Naive thymus-derived CD4-positive, alpha-beta T cell (primary cell): ENCODE measurements at regions of chr12 and their contacts with region 1.

Region 1: GRCh38 chr12:6533923-6534694 is at the start of gene GAPDH:
- DNase-seq: peak; percentile 66 to 94 (median 83)
- ATAC-seq: peak; percentile 66
- H3K4me3 ChIP-seq: peak within 1 kb of the TSS; percentile 97
- H3K4me3 Mint-ChIP-seq: peak within 1 kb of the TSS; percentile 90 to 99 (median 94)
- H3K27ac ChIP-seq: peak within 1 kb of the TSS; percentile 81
- H3K27ac Mint-ChIP-seq: peak within 1 kb of the TSS; percentile 92 to 100 (median 94)
- H3K4me1 ChIP-seq: peaks cover 31 to 43% of the 10 kb centered on the region in 2 donors
- H3K4me1 Mint-ChIP-seq: peaks cover 28 to 59% (median 42%) of the 10 kb centered on the region in 7 donors
- H3K27me3 ChIP-seq: no peaks in the 10 kb centered on the region
- H3K27me3 Mint-ChIP-seq: peaks cover 0 to 2% (median 0%) of the 10 kb centered on the region in 5 donors
- total RNA-seq, gene GAPDH: 330 to 4,503 (median 379) TPM

Region 2: GRCh38 chr12:6323340-6323994 is 210.6 kb before region 1 on chr12:
- CTCF ChIA-PET with region 1: interaction called, 7 read pairs
- POLR2A ChIA-PET with region 1: interaction called, 6 read pairs
- intact Hi-C with region 1: loop called in 1 of 2 experiments (anchors 1 kb)
- DNase-seq: peak in 5 of 9 donors; percentile 49 to 59 (median 52)
- ATAC-seq: peak; percentile 90
- H3K4me3 ChIP-seq: peak overlapping the region; percentile 45
- H3K4me3 Mint-ChIP-seq: peak overlapping the region; percentile 63 to 90 (median 82)
- H3K27ac ChIP-seq: peak overlapping the region; percentile 35
- H3K27ac Mint-ChIP-seq: peak overlapping the region; percentile 68 to 95 (median 89)
- H3K4me1 ChIP-seq: peaks cover 27 to 38% of the 10 kb centered on the region in 2 donors
- H3K4me1 Mint-ChIP-seq: peaks cover 37 to 74% (median 53%) of the 10 kb centered on the region in 7 donors
- H3K27me3 ChIP-seq: no peaks in the 10 kb centered on the region
- H3K27me3 Mint-ChIP-seq: peaks cover 0 to 6% (median 0%) of the 10 kb centered on the region in 5 donors

Region 3: DNA sequence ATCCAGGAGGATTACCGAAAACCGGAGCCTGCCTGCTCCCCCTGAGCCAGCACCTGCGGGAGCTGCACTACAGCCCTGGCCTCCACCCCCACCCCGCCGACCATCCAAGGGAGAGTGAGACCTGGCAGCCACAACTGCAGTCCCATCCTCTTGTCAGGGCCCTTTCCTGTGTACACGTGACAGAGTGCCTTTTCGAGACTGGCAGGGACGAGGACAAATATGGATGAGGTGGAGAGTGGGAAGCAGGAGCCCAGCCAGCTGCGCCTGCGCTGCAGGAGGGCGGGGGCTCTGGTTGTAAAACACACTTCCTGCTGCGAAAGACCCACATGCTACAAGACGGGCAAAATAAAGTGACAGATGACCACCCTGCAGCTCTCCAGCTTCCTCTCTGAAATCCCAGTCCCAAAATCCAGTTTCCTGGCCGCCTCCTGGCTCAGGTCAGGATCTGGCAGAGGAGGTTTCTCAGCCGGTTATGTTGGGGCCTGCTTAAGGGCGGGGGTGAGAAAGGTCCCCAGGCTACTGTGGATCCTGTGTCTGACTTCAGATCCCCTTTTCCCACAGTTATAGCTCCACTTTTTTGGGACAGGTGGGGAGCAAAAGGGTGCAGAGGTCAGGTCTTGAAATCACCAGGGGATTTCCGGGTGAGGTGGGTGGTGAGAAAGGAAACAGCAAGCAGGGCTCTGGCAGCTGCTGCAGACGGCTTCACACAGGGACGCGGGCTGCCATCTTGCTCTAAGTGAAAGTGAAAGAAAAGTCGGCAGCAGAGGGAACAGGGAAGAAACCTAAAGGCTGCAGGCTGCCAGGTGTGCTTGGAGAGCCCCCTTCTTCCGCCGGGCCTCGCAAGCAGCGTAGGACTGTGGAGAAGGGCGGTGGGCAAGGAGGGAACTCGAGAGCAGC is 82.5 kb before region 1 on chr12 and contains the start of gene TAPBPL:
- CTCF ChIA-PET with region 1: interaction called, 7 read pairs
- POLR2A ChIA-PET with region 1: interaction called, 22 read pairs
- intact Hi-C with region 1: no loop called
- DNase-seq: peak; percentile 49 to 93 (median 87)
- ATAC-seq: peak; percentile 94
- H3K4me3 ChIP-seq: peak within 1 kb of the TSS; percentile 83
- H3K4me3 Mint-ChIP-seq: peak within 1 kb of the TSS; percentile 96 to 100 (median 98)
- H3K27ac ChIP-seq: peak within 1 kb of the TSS; percentile 96
- H3K27ac Mint-ChIP-seq: peak within 1 kb of the TSS; percentile 96 to 100 (median 99)
- H3K4me1 ChIP-seq: peaks cover 50% of the 10 kb centered on the region in 2 donors
- H3K4me1 Mint-ChIP-seq: peaks cover 50 to 84% (median 73%) of the 10 kb centered on the region in 7 donors
- H3K27me3 ChIP-seq: no peaks in the 10 kb centered on the region
- H3K27me3 Mint-ChIP-seq: no peaks in the 10 kb centered on the region
- total RNA-seq, gene TAPBPL: 23.0 to 65.4 (median 52.9) TPM

Region 4: DNA sequence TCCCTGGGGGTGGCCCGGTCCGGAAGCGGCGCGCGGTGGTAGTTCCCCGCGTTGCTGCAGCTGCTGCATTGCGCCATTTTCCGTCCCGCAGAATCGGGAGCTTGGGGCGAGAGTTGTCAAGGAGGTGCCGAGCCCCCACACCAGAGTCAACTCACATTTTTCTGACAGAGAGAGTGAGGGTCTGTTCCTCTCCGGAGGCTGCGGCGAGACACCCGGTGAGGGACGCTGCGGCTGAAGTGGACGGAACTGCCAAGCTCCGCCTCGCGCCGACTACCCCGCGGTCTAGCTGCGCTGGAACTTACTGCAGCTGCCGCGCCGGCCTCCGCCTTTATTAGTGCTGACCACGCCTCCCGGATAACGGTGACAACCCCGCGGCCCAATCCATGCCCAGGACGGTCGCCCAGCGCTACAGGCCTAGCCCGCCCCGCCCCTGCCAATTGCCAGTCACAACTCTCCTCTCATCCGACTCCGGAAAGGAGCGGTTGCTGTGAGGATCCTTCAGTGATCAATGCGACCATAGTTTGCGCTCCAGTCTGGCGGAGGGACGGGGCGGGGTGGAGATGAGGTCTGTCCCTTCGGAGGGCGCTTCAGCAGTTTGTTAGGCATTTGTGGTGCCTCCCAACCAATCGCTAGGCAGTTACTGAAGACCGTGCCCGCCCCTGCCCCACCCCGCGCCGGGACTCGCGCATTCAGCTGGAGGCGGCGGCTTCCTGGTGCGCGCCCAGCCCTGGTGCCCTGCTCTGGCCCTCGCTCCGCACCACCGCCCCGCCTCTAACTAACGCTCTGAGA is 63.5 kb before region 1 on chr12 and contains the start of gene VAMP1:
- CTCF ChIA-PET with region 1: interaction called, 12 read pairs
- POLR2A ChIA-PET with region 1: interaction called, 87 read pairs
- intact Hi-C with region 1: loop called (anchors 1 kb)
- DNase-seq: peak; percentile 90 to 97 (median 95)
- ATAC-seq: peak; percentile 94
- H3K4me3 ChIP-seq: peak within 1 kb of the TSS; percentile 96
- H3K4me3 Mint-ChIP-seq: peak within 1 kb of the TSS; percentile 85 to 96 (median 92)
- H3K27ac ChIP-seq: peak within 1 kb of the TSS; percentile 75
- H3K27ac Mint-ChIP-seq: peak within 1 kb of the TSS; percentile 79 to 99 (median 95)
- H3K4me1 ChIP-seq: peaks cover 38 to 39% of the 10 kb centered on the region in 2 donors
- H3K4me1 Mint-ChIP-seq: peaks cover 26 to 59% (median 52%) of the 10 kb centered on the region in 7 donors
- H3K27me3 ChIP-seq: no peaks in the 10 kb centered on the region
- H3K27me3 Mint-ChIP-seq: peaks cover 0 to 5% (median 0%) of the 10 kb centered on the region in 5 donors
- total RNA-seq, gene VAMP1: 38.7 to 123 (median 47.9) TPM

Region 5: DNA sequence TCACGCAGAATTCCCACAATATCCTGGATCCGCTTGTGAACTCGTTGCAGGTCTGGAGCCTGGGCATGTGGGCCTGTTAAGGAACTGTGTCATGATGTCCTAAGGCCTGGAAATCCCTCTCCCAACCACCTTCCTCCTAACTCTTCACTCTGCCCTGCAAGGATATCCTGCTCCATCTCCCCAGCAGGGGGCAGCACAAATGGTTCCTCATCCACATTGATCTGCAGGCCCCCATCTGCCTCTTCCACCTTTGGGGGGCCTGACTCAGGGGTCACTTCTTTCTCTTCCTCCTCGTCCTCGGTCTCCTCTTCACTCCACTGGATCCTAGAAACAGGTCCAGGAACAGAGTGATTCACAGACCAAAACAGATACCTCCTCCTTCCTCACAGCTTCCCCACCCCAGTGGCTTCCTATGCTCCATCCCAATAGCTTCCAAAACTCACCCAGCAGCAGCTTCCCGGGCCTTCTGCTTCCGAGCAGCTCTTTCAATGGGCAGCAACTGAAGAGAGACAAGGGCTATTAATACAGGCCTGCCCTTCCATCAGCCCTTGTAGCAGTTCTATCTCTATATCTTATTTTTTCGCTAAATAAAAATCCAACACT is 29.4 kb after region 1 on chr12:
- CTCF ChIA-PET with region 1: interaction called, 4 read pairs
- POLR2A ChIA-PET with region 1: interaction called, 4 read pairs
- intact Hi-C with region 1: loop called (anchors 1 to 2 kb)
- DNase-seq: peak; percentile 36 to 68 (median 52)
- ATAC-seq: peak; percentile 43
- H3K4me3 ChIP-seq: no peak overlapping the region
- H3K4me3 Mint-ChIP-seq: peak overlapping the region in 2 of 10 donors; percentile 6 to 55
- H3K27ac ChIP-seq: no peak overlapping the region
- H3K27ac Mint-ChIP-seq: peak overlapping the region in 7 of 9 donors; percentile 9 to 86 (median 78)
- H3K4me1 ChIP-seq: peaks cover 8 to 14% of the 10 kb centered on the region in 2 donors
- H3K4me1 Mint-ChIP-seq: peaks cover 22 to 54% (median 41%) of the 10 kb centered on the region in 7 donors
- H3K27me3 ChIP-seq: no peaks in the 10 kb centered on the region
- H3K27me3 Mint-ChIP-seq: no peaks in the 10 kb centered on the region

Region 6: DNA sequence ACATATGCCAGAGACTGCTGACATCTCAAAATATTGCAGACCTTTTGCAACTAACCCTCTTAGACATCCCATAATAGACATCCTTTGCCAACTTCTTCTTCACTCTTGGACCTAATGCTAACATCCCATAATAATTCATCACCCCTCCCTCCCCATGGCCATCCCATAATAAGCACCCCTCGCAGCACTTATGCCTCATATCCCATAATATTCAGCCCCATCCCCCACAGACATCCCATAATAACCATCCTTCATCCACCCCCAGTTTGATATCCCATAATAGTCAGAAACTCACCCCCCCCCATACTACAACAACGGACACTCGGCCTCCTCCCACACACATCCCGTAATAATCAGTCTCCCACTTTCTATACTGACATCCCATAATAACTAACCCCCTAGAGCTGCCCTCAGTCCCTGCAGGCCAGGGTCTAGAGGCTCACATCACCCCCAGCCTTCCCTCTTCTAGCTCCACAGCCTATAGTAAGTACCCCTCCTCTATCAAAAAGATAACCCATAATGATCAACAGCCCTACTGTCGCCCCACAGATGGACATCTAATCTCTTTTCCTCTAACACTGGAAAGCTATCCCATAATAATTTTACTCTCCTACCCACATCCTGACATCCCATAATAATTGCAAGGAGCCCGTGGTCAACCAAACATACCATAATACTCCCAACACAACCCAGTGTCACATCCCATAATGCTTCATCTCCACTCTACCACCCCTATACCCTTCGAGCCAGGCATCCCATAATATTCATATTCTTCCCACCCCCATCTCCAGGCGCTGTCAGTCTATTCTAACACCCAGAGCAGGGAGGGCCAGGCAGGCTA is 73.9 kb after region 1 on chr12:
- CTCF ChIA-PET with region 1: no interaction called
- POLR2A ChIA-PET with region 1: interaction called, 10 read pairs
- intact Hi-C with region 1: loop called (anchors 1 to 2 kb)
- DNase-seq: peak in 8 of 9 donors; percentile 56 to 81 (median 71)
- ATAC-seq: peak; percentile 49
- H3K4me3 ChIP-seq: no peak overlapping the region
- H3K4me3 Mint-ChIP-seq: no peak overlapping the region
- H3K27ac ChIP-seq: peak overlapping the region; percentile 96
- H3K27ac Mint-ChIP-seq: no peak overlapping the region
- H3K4me1 ChIP-seq: peaks cover 46 to 47% of the 10 kb centered on the region in 2 donors
- H3K4me1 Mint-ChIP-seq: peaks cover 48 to 55% (median 51%) of the 10 kb centered on the region in 7 donors
- H3K27me3 ChIP-seq: no peaks in the 10 kb centered on the region
- H3K27me3 Mint-ChIP-seq: no peaks in the 10 kb centered on the region

Region 7: GRCh38 chr12:6708960-6709394 is 174.9 kb after region 1 on chr12:
- CTCF ChIA-PET with region 1: no interaction called
- POLR2A ChIA-PET with region 1: no interaction called
- intact Hi-C with region 1: no loop called
- DNase-seq: peak in 5 of 9 donors; percentile 25 to 75 (median 47)
- ATAC-seq: peak; percentile 61
- H3K4me3 ChIP-seq: no peak overlapping the region
- H3K4me3 Mint-ChIP-seq: peak overlapping the region; percentile 48 to 96 (median 81)
- H3K27ac ChIP-seq: peak overlapping the region; percentile 31
- H3K27ac Mint-ChIP-seq: peak overlapping the region; percentile 14 to 92 (median 84)
- H3K4me1 ChIP-seq: no peaks in the 10 kb centered on the region
- H3K4me1 Mint-ChIP-seq: peaks cover 6 to 10% (median 8%) of the 10 kb centered on the region in 7 donors
- H3K27me3 ChIP-seq: no peaks in the 10 kb centered on the region
- H3K27me3 Mint-ChIP-seq: peaks cover 0 to 21% (median 19%) of the 10 kb centered on the region in 5 donors

Region 8: DNA sequence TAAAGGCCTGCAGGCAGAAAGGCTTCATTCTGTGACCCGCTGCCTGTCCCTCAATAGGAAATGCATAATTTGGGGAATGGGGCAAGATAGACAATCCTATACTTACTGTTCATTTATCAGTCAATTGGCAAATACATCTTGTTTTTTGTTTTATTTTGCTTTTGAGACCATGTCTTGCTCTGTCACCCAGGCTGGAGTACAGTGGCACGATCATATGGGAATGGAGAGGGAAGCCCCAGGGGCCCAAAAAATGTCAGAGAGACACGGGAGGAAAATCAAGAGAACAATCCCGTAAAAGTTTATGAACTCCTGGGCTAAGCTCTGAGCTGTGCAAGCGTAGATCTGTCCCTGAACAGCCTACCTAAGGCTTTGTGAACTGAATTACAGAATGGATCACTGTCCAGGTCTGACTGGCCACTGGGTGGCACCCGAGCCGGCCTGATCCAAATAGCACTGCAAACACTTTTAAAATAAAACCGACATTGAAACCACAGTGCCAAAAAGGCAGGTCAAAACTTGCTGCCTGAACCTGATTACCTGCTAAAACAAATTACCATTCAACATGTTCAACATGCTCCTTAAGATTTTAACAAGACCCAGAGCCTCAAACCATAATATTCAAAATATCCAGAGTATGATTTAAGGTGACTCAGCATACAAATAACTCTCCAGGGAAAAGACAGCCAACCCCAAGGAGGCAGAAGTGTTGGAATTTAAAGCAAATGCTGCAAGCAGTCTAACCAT is 201.5 kb after region 1 on chr12:
- CTCF ChIA-PET with region 1: no interaction called
- POLR2A ChIA-PET with region 1: no interaction called
- intact Hi-C with region 1: no loop called
- DNase-seq: peak in 4 of 9 donors; percentile 23 to 39 (median 29)
- ATAC-seq: peak; percentile 81
- H3K4me3 ChIP-seq: no peak overlapping the region
- H3K4me3 Mint-ChIP-seq: no peak overlapping the region
- H3K27ac ChIP-seq: no peak overlapping the region
- H3K27ac Mint-ChIP-seq: peak overlapping the region in 1 of 9 donors; percentile 43
- H3K4me1 ChIP-seq: no peaks in the 10 kb centered on the region
- H3K4me1 Mint-ChIP-seq: peaks cover 0 to 10% (median 5%) of the 10 kb centered on the region in 7 donors
- H3K27me3 ChIP-seq: no peaks in the 10 kb centered on the region
- H3K27me3 Mint-ChIP-seq: no peaks in the 10 kb centered on the region